PC-3 (cell line): ENCODE measurements at regions of chr1 and their contacts with region 1.

Region 1: GRCh38 chr1:210250998-210251679 is 18.5 kb downstream of the SERTAD4 start:
- DNase-seq: peak; percentile 84
- ATAC-seq: peak; percentile 79
- H3K4me3 ChIP-seq: peak overlapping the region; percentile 68
- H3K27ac ChIP-seq: no peak overlapping the region
- H3K4me1 ChIP-seq: peaks cover 27% of the 10 kb centered on the region
- H3K27me3 ChIP-seq: no peaks in the 10 kb centered on the region
- CTCF ChIP-seq: no peak

Region 2: DNA sequence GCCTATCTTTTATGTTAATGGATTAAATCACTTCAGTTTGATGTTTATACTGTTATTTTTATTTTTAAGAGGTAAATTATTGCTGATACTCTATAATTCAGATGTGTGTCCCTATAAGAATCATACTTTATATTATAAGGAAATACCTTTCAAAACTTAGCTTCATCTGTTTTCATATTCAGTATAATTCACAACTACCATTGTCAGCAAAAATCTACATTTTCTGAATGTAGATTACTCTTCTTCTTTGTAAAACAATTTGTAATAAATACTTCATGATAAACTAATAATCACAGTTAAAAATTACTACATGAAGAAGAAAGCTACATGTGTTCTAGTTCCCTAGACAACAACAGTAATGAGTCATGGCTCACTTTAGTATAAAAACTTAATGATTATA is 133.9 kb before region 1 on chr1:
- CTCF ChIA-PET with region 1: no interaction called
- POLR2A ChIA-PET with region 1: no interaction called
- intact Hi-C with region 1: no loop called
- DNase-seq: no peak
- ATAC-seq: no peak
- H3K4me3 ChIP-seq: no peak overlapping the region
- H3K27ac ChIP-seq: no peak overlapping the region
- H3K4me1 ChIP-seq: no peaks in the 10 kb centered on the region
- H3K27me3 ChIP-seq: no peaks in the 10 kb centered on the region
- CTCF ChIP-seq: no peak

Region 3: GRCh38 chr1:210262167-210262896 is 11.2 kb after region 1 on chr1:
- CTCF ChIA-PET with region 1: no interaction called
- POLR2A ChIA-PET with region 1: no interaction called
- intact Hi-C with region 1: loop called (anchors 1 kb)
- DNase-seq: peak; percentile 67
- ATAC-seq: peak; percentile 81
- H3K4me3 ChIP-seq: no peak overlapping the region
- H3K27ac ChIP-seq: peak overlapping the region; percentile 19
- H3K4me1 ChIP-seq: peaks cover 5% of the 10 kb centered on the region; the same call in 1 of the 2 replicates
- H3K27me3 ChIP-seq: no peaks in the 10 kb centered on the region
- CTCF ChIP-seq: no peak

Region 4: DNA sequence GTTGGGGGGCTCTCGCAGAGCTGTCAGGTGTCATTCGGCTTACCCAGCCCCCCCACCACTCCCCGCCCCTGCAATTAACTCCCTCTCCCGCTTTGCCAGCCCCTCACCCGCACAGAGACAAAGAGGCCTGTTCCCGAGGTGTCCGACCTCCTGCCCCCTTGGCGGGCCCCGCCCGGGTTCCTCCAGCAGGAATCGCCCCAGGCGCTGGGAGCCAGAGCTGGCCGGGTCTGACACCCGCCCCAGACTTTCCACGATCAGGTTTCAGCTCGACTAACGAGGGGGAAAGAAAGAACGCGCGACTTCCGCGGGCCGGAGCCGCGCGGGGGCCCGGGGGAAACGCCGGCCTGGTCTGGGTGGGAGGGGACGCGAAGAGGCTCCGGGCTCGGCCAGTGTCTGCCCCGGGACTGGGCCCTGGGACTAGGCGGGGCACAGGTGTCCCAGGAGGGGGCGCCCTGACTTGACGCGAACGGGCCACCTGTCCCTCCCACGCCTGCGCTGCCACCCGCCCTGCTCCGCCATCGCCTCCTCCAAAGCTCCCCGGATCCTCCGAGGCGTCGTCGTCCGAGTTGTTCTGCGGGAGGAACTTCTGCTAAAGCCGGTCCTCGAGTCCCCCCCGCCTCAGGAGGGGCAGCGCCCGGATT is 41.2 kb after region 1 on chr1:
- CTCF ChIA-PET with region 1: no interaction called
- POLR2A ChIA-PET with region 1: no interaction called
- intact Hi-C with region 1: loop called (anchors 5 kb)
- DNase-seq: peak; percentile 57
- ATAC-seq: peak; percentile 86
- H3K4me3 ChIP-seq: peak overlapping the region; percentile 69
- H3K27ac ChIP-seq: no peak overlapping the region
- H3K4me1 ChIP-seq: peaks cover 12% of the 10 kb centered on the region
- H3K27me3 ChIP-seq: no peaks in the 10 kb centered on the region
- CTCF ChIP-seq: peak; percentile 70

Region 5: DNA sequence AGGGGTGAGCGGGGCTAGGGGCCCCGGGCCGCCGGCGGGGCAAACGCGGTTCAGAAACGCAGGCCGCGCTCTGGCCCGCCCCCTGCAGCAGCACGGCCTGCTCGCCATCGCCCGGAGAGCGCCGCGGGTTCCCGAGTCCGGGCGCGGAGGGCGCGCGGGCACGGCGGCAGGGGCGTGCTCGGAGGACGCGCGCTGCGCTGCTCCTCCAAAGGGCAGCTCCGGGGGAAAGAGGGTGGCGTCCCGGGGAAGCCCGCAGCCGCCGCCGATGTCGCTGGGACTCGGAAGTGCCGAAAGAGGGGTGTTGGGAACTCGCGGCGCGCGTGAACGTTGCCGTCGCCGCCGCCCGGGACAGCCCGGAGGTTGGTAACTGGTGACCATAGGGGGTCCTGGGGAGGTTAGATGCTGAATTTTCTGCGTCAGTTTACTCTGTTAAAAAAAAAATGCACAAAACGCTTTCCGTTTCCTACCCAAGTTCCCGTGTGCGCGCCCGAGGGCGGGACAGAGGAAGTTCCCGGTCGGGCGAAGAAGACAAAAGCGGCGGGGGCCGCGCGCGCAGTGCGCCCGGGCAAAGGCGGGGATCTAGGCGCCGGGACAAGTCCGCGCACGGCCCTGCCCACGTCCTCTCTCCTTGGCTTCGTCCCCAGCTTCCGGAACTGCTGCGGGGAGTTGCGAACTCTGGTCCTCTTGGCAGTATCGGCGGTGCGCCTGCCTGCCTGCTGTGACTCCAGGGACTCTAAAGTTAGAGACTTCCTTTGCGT is 77.8 kb after region 1 on chr1 and contains the start of gene HHAT:
- CTCF ChIA-PET with region 1: no interaction called
- POLR2A ChIA-PET with region 1: no interaction called
- intact Hi-C with region 1: loop called (anchors 2 kb)
- DNase-seq: peak; percentile 86
- ATAC-seq: peak; percentile 78
- H3K4me3 ChIP-seq: peak within 1 kb of the TSS; percentile 93
- H3K27ac ChIP-seq: peak within 1 kb of the TSS; percentile 79
- H3K4me1 ChIP-seq: peaks cover 40% of the 10 kb centered on the region
- H3K27me3 ChIP-seq: no peaks in the 10 kb centered on the region
- CTCF ChIP-seq: peak; percentile 32; the same call in 1 of the 2 replicates
- total RNA-seq, gene HHAT: 2.4 and 3.4 TPM in 2 replicates